ENCODE measurements at regions of chr1 and their contacts with region 1.

Region 1: DNA sequence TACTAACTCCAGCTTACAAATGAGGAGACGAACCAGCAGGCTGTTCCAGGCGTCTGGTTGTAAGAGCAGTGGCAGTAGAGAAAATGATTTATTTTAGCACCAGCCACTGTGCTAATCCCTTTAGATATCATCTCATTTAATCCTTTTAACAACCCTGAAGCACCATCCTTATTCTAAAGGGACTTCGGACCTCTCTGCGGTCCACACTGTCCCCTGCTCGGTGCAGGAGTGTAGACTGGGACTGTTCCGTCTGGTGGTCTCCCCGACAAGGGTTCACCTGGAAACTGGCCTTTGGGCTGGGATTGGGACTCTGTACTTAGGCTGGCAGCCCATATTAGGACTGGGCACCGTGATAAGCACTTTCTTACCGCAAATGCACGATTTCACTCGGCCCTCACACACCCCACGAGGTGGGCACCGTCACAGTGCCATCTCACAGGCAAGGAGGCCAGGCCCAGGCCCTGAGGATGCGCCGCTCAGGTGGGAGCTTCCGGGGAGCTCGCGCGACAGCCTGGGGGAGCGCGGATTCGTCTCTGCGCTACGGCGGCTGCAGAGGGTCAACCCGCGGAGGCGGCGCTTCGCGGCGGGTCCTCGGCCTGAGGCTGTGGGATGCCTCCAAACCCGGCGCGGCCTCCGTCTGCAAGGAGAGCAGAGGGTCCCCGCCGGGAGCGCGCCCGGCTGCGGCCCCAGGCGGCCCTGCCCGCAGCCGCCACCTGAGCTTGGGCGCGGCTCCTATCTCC is 45.2 kb downstream of the ATP1A1 start:
- DNase-seq: peak; percentile 82 to 91 (median 85)
- H3K4me3 ChIP-seq: peak overlapping the region; percentile 77
- H3K27ac ChIP-seq: peak overlapping the region; percentile 36 to 52
- H3K4me1 ChIP-seq: peaks cover 10% of the 10 kb centered on the region
- H3K27me3 ChIP-seq: no peaks in the 10 kb centered on the region
- CTCF ChIP-seq: no peak
- EP300 ChIP-seq: no peak
- POLR2A ChIP-seq: no peak

Region 2: GRCh38 chr1:115797486-115797885 is 620.8 kb before region 1 on chr1:
- intact Hi-C with region 1: no loop called
- DNase-seq: no peak
- H3K4me3 ChIP-seq: no peak overlapping the region
- H3K27ac ChIP-seq: no peak overlapping the region
- H3K4me1 ChIP-seq: peaks cover 5% of the 10 kb centered on the region
- H3K27me3 ChIP-seq: no peaks in the 10 kb centered on the region
- CTCF ChIP-seq: no peak
- EP300 ChIP-seq: no peak
- POLR2A ChIP-seq: no peak

Region 3: DNA sequence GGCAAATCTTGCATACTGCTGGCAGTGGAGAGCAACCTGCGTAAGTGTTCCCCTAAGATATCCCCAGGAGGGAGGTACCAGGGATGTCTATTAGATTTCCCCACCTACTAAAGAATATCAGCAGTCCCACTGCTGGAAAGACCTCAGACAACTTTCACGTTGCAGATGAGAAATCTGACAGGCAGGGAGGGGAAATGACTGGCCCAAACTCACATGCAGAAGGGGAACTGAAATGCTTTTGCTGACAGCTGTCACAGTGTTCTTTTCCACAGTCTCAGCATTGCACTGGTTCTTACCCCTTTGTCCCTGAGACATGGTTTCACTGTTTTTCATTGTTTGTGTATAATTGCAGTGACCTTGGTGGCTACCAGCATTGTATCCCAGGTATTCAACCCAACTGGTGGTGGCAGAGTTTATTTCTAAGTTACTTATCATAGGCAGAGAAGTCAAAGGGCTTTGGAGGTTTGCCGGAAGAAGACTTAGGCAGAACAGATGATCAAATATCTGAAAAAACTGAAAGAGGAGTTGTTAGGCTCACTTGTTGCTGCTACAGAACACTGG is 130.0 kb before region 1 on chr1:
- intact Hi-C with region 1: no loop called
- DNase-seq: no peak
- H3K4me3 ChIP-seq: no peak overlapping the region
- H3K27ac ChIP-seq: no peak overlapping the region
- H3K4me1 ChIP-seq: no peaks in the 10 kb centered on the region
- H3K27me3 ChIP-seq: no peaks in the 10 kb centered on the region
- CTCF ChIP-seq: no peak
- EP300 ChIP-seq: no peak
- POLR2A ChIP-seq: no peak

Region 4: GRCh38 chr1:116377541-116378529 is 40.4 kb before region 1 on chr1:
- intact Hi-C with region 1: loop called in 2 of 4 experiments (anchors 5 kb)
- DNase-seq: peak; percentile 64 to 80 (median 74)
- H3K4me3 ChIP-seq: peak overlapping the region; percentile 0
- H3K27ac ChIP-seq: peak overlapping the region in 1 of 2 donors; percentile 74
- H3K4me1 ChIP-seq: peaks cover 27% of the 10 kb centered on the region
- H3K27me3 ChIP-seq: no peaks in the 10 kb centered on the region
- CTCF ChIP-seq: no peak
- EP300 ChIP-seq: no peak
- POLR2A ChIP-seq: no peak

Region 5: DNA sequence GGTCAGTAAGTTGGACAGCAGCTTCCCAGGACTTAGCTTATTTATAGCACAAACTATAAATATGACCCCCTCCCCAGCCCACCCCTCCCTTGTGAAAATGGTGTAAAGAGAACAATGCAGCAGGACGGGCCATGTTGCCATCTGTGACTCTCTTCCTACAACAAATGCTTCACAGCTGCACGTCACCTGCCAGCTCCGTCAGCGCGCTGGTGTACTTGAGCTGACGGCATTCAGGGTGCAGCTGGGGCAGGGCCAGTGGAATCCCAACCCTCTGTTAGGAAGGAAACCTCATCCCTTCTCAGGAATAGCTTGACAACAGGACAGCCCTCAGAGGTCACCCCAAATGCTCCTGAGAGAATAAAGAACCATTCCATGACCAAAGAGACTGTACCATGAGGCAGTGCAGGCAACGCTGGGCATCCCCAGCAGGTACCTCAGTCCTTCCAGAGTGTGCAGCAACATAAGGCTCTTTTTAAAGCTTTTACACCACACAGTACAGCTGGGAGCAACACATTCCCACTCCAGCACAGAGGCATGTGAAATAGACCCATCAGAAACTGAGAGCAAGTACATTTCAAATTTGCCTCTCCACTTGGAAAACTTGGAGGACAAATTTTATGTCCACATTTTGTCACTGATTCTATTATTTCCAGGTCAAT is 39.8 kb after region 1 on chr1:
- intact Hi-C with region 1: no loop called
- DNase-seq: no peak
- H3K4me3 ChIP-seq: no peak overlapping the region
- H3K27ac ChIP-seq: no peak overlapping the region
- H3K4me1 ChIP-seq: no peaks in the 10 kb centered on the region
- H3K27me3 ChIP-seq: no peaks in the 10 kb centered on the region
- CTCF ChIP-seq: no peak
- EP300 ChIP-seq: no peak
- POLR2A ChIP-seq: no peak